ENCODE measurements at regions of chr17 and their contacts with region 1.

Region 1: DNA sequence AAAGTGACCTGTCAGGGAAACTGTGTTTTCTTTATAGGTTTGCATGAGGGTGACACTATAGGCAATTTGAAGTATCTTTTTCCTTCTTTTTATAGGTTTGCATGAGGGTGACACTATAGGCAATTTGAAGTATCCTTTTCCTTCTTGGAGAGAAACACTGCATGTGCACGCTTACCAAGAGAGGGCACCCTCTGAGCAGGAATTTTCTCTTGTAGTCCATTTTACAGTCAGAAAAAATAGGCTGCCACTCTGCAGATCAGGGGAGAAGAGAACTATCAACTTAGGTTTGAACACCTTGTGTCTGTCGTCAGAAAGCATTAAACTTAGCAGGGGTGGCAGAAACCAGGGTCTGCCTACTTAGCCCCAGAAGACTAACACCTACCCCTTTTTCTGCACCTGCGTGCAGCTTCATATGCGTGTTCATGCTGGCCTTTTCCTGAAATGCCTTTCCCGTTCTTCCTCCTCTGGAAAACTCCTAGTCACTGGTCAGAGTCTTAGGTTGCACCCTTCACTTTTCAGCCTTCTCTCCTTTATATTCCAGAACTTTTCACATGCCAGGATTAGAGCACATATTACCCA is 16.4 kb upstream of the SMIM36 start:
- DNase-seq: peak; percentile 79
- H3K4me3 ChIP-seq: no peak overlapping the region
- H3K27ac ChIP-seq: no peak overlapping the region
- H3K4me1 ChIP-seq: peaks cover 9% of the 10 kb centered on the region
- H3K27me3 ChIP-seq: no peaks in the 10 kb centered on the region
- CTCF ChIP-seq: peak; percentile 89

Region 2: DNA sequence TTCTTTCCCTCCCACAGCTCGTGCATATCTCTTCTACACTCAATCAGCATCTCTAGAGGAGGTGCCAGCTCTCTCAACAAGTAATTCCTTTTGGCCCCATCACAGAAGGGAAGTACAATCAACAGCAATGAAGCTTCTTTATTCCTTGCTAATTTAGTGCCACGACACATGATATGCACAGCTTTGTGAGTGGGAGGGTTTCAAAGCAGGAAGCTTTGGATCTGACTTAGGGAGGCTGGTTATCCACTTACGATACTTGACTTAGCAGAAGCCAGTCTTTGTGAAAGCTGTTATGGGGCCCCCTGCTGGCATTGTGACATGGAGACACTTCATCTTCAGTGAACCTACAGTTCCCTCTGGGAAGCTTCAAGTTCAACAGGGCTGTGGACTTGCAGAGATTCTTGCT is 114.0 kb after region 1 on chr17:
- CTCF ChIA-PET with region 1: no interaction called
- POLR2A ChIA-PET with region 1: no interaction called
- intact Hi-C with region 1: loop called (anchors 2 kb)
- DNase-seq: peak; percentile 92
- H3K4me3 ChIP-seq: no peak overlapping the region
- H3K27ac ChIP-seq: no peak overlapping the region
- H3K4me1 ChIP-seq: peaks cover 23% of the 10 kb centered on the region
- H3K27me3 ChIP-seq: no peaks in the 10 kb centered on the region
- CTCF ChIP-seq: peak; percentile 77

Region 3: GRCh38 chr17:55770148-55770870 is 242.7 kb after region 1 on chr17:
- CTCF ChIA-PET with region 1: interaction called, 27 read pairs
- POLR2A ChIA-PET with region 1: no interaction called
- intact Hi-C with region 1: loop called (anchors 1 kb)
- DNase-seq: peak; percentile 78
- H3K4me3 ChIP-seq: no peak overlapping the region
- H3K27ac ChIP-seq: no peak overlapping the region
- H3K4me1 ChIP-seq: peaks cover 16% of the 10 kb centered on the region
- H3K27me3 ChIP-seq: no peaks in the 10 kb centered on the region
- CTCF ChIP-seq: peak; percentile 70

Region 4: DNA sequence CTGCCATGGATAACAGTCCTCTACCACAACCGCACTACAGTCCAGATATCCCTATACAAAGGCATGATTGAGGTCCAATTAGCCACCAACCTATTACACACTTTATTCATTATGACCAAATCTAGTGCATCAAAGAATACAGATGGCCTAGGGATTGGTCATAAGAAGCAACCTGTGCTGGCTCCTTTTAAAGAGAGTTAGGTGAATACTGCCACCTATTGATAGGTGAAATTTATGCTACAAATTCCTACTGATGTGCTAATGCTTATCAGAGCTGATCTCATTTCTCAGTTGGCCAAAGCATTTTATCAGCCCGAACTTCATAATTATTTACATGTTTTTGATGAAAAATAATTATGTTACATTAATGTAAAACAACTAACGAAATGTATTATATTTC is 791.9 kb after region 1 on chr17:
- CTCF ChIA-PET with region 1: no interaction called
- POLR2A ChIA-PET with region 1: no interaction called
- intact Hi-C with region 1: loop called (anchors 5 kb)
- DNase-seq: peak; percentile 58
- H3K4me3 ChIP-seq: no peak overlapping the region
- H3K27ac ChIP-seq: no peak overlapping the region
- H3K4me1 ChIP-seq: no peaks in the 10 kb centered on the region
- H3K27me3 ChIP-seq: peaks cover 47% of the 10 kb centered on the region
- CTCF ChIP-seq: peak; percentile 61

Region 5: GRCh38 chr17:56715613-56716357 is 1188.2 kb after region 1 on chr17:
- CTCF ChIA-PET with region 1: interaction called, 3 read pairs
- POLR2A ChIA-PET with region 1: no interaction called
- intact Hi-C with region 1: loop called (anchors 10 kb)
- DNase-seq: peak; percentile 84
- H3K4me3 ChIP-seq: no peak overlapping the region
- H3K27ac ChIP-seq: no peak overlapping the region
- H3K4me1 ChIP-seq: no peaks in the 10 kb centered on the region
- H3K27me3 ChIP-seq: no peaks in the 10 kb centered on the region
- CTCF ChIP-seq: peak; percentile 87

Measured in A673 (cell line).